AG04450 (cell line): ENCODE measurements at regions of chr5 and their contacts with region 1.

Region 1: DNA sequence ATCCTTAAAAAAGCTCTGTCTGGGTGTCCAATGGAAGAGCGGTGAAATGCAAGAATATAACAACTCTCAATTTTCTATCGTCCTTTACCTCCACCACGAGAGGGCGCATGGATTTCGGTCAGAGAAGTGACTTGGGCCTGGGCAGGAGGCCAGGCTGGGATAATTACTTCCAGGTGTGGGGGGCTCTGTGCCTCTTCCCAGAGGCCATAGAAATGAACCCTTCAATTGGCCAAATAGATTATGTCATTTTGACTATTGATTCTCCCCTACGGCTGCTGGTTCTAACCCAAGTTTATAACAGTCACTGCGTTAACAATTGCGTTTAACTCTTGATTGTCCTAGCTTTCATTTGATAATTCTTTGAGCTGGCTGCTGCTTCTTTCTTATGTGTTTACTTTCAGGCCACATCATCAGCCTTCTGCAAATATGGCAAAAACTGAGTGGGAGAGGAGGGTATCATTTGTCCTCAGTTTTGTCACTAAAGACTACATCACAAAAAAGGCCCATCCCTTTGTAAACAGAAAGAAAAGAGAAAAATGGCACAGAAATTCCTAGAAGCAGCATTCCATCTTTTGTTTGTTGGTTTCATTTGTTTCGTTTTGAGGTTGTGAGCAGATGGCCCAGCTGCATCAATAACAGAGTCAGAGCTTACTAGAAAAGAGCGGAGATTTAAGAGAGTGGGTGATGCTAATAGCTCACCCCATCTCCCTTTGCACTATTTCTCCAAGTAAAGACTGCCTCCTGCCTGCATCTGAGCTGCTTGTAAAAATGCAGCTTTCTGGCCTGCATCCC is 45.4 kb upstream of the ZFR start:
- DNase-seq: peak; percentile 83
- H3K4me3 ChIP-seq: peak overlapping the region; percentile 7; the same call in 1 of the 2 replicates
- H3K27ac ChIP-seq: peak overlapping the region; percentile 75
- H3K27me3 ChIP-seq: no peaks in the 10 kb centered on the region
- CTCF ChIP-seq: peak; percentile 80

Region 2: GRCh38 chr5:32004404-32004803 is 485.6 kb before region 1 on chr5:
- CTCF ChIA-PET with region 1: no interaction called
- POLR2A ChIA-PET with region 1: no interaction called
- DNase-seq: no peak
- H3K4me3 ChIP-seq: no peak overlapping the region
- H3K27ac ChIP-seq: no peak overlapping the region
- H3K27me3 ChIP-seq: no peaks in the 10 kb centered on the region
- CTCF ChIP-seq: no peak

Region 3: DNA sequence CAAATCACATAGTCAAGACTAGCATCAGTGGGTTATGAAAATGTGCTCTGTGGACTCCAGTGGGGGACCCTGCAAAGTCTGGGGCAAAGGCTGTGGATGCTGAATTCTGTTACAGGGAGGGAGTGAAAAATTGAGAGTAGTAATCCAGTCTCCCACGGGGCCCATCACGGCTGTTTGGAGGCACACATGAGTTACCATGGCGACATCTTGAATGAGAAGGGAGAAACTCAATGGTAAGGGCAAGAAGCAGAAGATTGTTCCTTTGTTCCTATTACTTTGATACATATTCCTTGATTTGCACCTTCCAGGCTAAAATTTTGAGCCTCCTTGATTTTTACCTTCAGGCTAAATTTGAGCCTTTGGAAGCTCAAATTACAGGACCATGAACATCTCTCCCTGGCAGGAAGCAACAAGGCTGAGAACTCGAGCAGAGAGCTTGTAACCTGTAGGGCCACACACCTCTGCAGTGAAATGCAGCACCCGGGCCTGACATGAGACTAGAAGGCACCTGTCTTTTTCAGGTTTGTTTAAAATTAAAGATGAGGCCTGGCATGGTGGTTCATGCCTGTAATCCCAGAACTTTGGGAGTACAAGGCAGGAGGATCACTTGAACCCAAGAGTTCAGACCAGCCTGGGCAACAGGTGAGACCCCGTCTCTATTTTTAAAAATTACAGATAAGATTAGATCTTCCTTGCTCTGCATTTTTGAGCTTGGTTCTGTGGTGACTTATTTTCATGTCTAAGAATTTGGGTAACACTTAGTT is 14.5 kb before region 1 on chr5:
- CTCF ChIA-PET with region 1: interaction called, 22 read pairs
- POLR2A ChIA-PET with region 1: no interaction called
- DNase-seq: no peak
- H3K4me3 ChIP-seq: no peak overlapping the region
- H3K27ac ChIP-seq: no peak overlapping the region
- H3K27me3 ChIP-seq: no peaks in the 10 kb centered on the region
- CTCF ChIP-seq: no peak

Region 4: GRCh38 chr5:32504989-32505596 is 15.1 kb after region 1 on chr5:
- CTCF ChIA-PET with region 1: interaction called, 62 read pairs
- POLR2A ChIA-PET with region 1: interaction called, 27 read pairs
- DNase-seq: peak; percentile 95
- H3K4me3 ChIP-seq: peak overlapping the region; percentile 38; the same call in 1 of the 2 replicates
- H3K27ac ChIP-seq: peak overlapping the region; percentile 89
- H3K27me3 ChIP-seq: no peaks in the 10 kb centered on the region
- CTCF ChIP-seq: no peak

Region 5: DNA sequence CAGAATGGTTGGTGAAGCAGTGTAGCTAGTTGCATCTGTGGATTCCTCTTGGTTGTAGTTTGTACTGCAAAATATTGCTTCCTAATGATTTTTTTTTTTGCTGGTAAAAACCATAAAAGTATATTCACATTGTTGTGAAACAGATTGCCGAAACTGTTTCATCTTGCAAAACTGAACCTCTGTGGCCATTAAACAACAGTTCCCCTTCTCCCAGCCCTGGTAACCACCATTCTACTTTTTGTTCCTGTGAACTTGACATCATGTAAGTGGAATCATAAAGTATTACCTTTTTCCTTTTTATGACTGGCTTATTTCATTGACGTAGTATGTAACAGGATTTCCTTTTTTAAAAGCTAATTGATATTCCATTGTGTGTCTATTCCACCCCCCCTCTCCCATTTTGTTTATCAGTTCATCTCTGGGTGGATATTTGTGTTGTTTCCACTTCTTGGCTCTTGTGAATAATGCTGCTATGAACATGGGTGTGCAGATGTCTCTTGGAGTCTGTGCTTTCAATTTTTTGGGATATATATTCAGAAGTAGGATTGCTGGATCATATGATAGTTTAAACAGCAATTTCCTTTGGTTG is 107.1 kb after region 1 on chr5:
- CTCF ChIA-PET with region 1: interaction called, 19 read pairs
- POLR2A ChIA-PET with region 1: no interaction called
- DNase-seq: no peak
- H3K4me3 ChIP-seq: no peak overlapping the region
- H3K27ac ChIP-seq: no peak overlapping the region
- H3K27me3 ChIP-seq: no peaks in the 10 kb centered on the region
- CTCF ChIP-seq: no peak

Region 6: GRCh38 chr5:32613050-32613672 is 123.2 kb after region 1 on chr5:
- CTCF ChIA-PET with region 1: interaction called, 12 read pairs
- POLR2A ChIA-PET with region 1: interaction called, 4 read pairs
- DNase-seq: peak; percentile 44
- H3K4me3 ChIP-seq: no peak overlapping the region
- H3K27ac ChIP-seq: no peak overlapping the region
- H3K27me3 ChIP-seq: no peaks in the 10 kb centered on the region
- CTCF ChIP-seq: peak; percentile 96